CD8-positive, alpha-beta T cell (primary cell): ENCODE measurements at regions of chr19 and their contacts with region 1.

Region 1: DNA sequence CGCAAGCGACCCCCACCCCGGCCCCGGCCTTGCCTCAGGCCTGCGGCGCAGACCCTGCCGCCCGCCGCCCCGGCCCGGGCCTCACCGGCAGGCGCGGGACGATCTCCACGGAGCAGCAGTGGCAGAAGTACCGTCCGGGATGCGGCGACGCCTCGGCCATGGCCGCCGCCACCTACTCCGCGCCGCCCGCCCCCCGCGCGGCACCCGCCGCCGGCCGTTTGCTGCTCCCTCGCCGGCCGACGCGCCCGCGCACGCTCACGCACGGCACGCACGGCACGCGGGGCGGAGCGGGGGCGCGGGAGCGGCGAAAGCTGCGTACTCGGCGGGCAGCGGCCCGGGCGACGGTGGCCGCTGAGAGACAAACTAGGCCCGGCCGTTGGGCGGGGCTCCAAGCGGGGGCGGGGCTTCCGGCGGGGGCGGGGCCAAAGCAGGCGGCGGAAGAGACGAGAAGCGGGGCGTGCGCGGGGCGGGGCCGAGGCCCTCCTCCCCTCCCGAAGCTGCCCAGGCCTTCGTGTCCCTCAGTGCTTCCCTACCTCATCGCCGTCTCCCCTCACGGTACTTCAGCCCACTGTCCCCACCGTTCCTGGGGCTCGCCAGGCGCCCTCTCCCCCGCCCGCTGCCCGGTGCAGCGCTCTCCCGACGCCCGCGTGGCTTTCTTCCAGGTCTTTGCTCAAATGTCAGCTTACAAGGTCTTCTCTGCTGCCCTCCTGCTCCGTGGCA is at the start of gene RNF126:
- DNase-seq: peak; percentile 91 to 97 (median 94)
- ATAC-seq: peak; percentile 48
- H3K4me3 ChIP-seq: peak within 1 kb of the TSS; percentile 67 to 70
- H3K4me3 Mint-ChIP-seq: peak within 1 kb of the TSS; percentile 96
- H3K27ac ChIP-seq: peak within 1 kb of the TSS; percentile 81 to 94
- H3K27ac Mint-ChIP-seq: peak within 1 kb of the TSS; percentile 99
- H3K4me1 ChIP-seq: peaks cover 45% of the 10 kb centered on the region
- H3K4me1 Mint-ChIP-seq: peaks cover 38% of the 10 kb centered on the region
- H3K27me3 ChIP-seq: peaks cover 0 to 2% of the 10 kb centered on the region in 2 experiments
- H3K27me3 Mint-ChIP-seq: no peaks in the 10 kb centered on the region
- CTCF ChIP-seq: no peak
- total RNA-seq, gene RNF126: 99.7 to 107 TPM

Region 2: DNA sequence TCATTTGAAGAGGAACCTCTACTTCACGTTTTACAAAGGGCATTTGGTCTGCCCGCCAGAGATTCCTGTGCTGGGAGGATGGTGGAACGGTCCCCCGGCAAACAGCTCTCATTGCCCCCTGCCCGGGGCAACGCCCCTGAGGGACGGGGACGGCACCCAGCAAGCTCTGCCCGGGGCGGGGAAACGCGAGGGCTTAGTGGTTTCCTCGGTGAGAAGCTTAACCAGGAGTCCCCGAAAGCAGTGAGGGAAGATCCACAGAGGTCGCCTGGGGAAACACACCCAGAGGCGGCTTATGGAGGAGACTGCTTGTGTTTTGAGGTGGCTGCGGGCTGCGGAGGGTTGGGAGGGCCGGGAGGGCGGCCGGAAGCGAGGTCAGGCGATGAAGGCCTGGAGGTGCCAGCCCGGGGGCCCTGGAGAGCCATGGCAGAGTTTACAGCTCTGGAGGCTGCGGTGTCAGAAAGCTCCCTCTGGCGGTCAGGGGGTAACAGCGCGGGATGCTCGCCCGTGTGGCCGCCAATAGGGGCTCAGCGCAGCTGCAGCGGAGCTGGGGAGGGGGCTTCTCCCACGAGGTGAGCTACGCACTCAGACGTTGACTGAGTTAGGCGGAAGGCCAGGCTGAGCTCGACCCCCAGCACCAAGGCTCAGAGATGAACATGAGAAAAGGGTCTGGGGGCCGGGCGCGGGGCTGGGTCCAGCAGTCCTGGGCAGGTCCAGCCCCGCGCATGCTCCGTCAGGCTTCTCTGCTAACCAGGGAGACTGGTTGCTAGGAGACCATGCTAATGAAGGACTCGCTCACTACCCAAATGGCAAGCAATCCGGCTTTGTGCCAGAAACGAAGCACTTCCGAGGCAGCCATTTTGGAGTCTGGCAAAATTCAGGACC is 156.5 kb before region 1 on chr19:
- CTCF ChIA-PET with region 1: interaction called, 4 read pairs
- POLR2A ChIA-PET with region 1: interaction called, 5 read pairs
- intact Hi-C with region 1: loop called (anchors 1 to 10 kb)
- DNase-seq: peak; percentile 83 to 98 (median 94)
- ATAC-seq: peak; percentile 49
- H3K4me3 ChIP-seq: peak overlapping the region; percentile 69 to 80
- H3K4me3 Mint-ChIP-seq: peak overlapping the region; percentile 96
- H3K27ac ChIP-seq: peak overlapping the region; percentile 87 to 98
- H3K27ac Mint-ChIP-seq: peak overlapping the region; percentile 98
- H3K4me1 ChIP-seq: peaks cover 42% of the 10 kb centered on the region
- H3K4me1 Mint-ChIP-seq: peaks cover 41% of the 10 kb centered on the region
- H3K27me3 ChIP-seq: no peaks in the 10 kb centered on the region
- H3K27me3 Mint-ChIP-seq: no peaks in the 10 kb centered on the region
- CTCF ChIP-seq: peak; percentile 93

Region 3: GRCh38 chr19:588093-588740 is 74.9 kb before region 1 on chr19:
- CTCF ChIA-PET with region 1: interaction called, 4 read pairs
- POLR2A ChIA-PET with region 1: no interaction called
- intact Hi-C with region 1: loop called in 1 of 2 experiments (anchors 2 kb)
- DNase-seq: peak in 8 of 9 experiments; percentile 36 to 81 (median 68)
- ATAC-seq: peak; percentile 65
- H3K4me3 ChIP-seq: no peak overlapping the region
- H3K4me3 Mint-ChIP-seq: peak overlapping the region; percentile 37
- H3K27ac ChIP-seq: no peak overlapping the region
- H3K27ac Mint-ChIP-seq: no peak overlapping the region
- H3K4me1 ChIP-seq: peaks cover 26% of the 10 kb centered on the region
- H3K4me1 Mint-ChIP-seq: peaks cover 16% of the 10 kb centered on the region
- H3K27me3 ChIP-seq: peaks cover 11 to 38% of the 10 kb centered on the region in 2 experiments
- H3K27me3 Mint-ChIP-seq: peaks cover 15% of the 10 kb centered on the region
- CTCF ChIP-seq: peak; percentile 61

Region 4: GRCh38 chr19:680287-681028 is 17.3 kb after region 1 on chr19:
- CTCF ChIA-PET with region 1: interaction called, 7 read pairs
- POLR2A ChIA-PET with region 1: interaction called, 23 read pairs
- intact Hi-C with region 1: loop called (anchors 1 kb)
- DNase-seq: peak; percentile 99 to 100 (median 100)
- ATAC-seq: peak; percentile 79
- H3K4me3 ChIP-seq: peak overlapping the region; percentile 59 to 94
- H3K4me3 Mint-ChIP-seq: peak overlapping the region; percentile 91
- H3K27ac ChIP-seq: peak overlapping the region; percentile 73 to 88
- H3K27ac Mint-ChIP-seq: peak overlapping the region; percentile 97
- H3K4me1 ChIP-seq: peaks cover 20% of the 10 kb centered on the region
- H3K4me1 Mint-ChIP-seq: peaks cover 8% of the 10 kb centered on the region
- H3K27me3 ChIP-seq: peaks cover 0 to 16% of the 10 kb centered on the region in 2 experiments
- H3K27me3 Mint-ChIP-seq: peaks cover 4% of the 10 kb centered on the region
- CTCF ChIP-seq: peak; percentile 37

Region 5: DNA sequence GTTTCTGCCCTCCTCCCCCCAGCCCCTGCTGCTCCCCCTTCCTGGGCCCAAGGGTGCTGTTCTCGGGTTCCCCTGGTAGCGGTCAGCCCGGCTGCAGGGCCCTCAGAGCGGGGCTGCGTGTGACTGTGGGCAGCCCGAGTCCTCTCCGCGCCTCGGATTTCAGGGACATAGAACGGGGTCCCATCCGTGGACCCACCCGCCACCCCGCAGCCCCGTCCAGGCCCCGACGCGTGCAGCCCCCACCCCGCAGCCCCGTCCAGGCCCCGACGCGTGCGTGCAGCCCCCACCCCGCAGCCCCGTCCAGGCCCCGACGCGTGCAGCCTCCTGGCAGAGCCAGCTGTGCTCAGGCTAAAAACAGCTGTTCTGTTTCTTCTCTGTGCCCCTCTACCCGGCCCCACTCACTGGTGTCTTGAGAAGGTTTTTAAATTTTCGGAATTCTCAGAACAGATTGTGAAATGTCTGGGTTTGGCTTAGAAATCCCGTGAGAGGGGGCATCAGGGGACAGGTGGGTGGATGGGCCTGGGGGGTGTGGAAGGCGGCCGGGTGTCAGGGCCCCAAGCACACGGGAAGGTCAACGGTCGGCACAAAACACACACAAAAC is 172.2 kb after region 1 on chr19:
- CTCF ChIA-PET with region 1: no interaction called
- POLR2A ChIA-PET with region 1: no interaction called
- intact Hi-C with region 1: no loop called
- DNase-seq: no peak
- ATAC-seq: no peak
- H3K4me3 ChIP-seq: no peak overlapping the region
- H3K4me3 Mint-ChIP-seq: no peak overlapping the region
- H3K27ac ChIP-seq: no peak overlapping the region
- H3K27ac Mint-ChIP-seq: no peak overlapping the region
- H3K4me1 ChIP-seq: no peaks in the 10 kb centered on the region
- H3K4me1 Mint-ChIP-seq: no peaks in the 10 kb centered on the region
- H3K27me3 ChIP-seq: peaks cover 0 to 4% of the 10 kb centered on the region in 2 experiments
- H3K27me3 Mint-ChIP-seq: peaks cover 15% of the 10 kb centered on the region
- CTCF ChIP-seq: no peak

Region 6: GRCh38 chr19:907183-907853 is 244.2 kb after region 1 on chr19:
- CTCF ChIA-PET with region 1: no interaction called
- POLR2A ChIA-PET with region 1: no interaction called
- intact Hi-C with region 1: loop called in 1 of 2 experiments (anchors 5 kb)
- DNase-seq: peak in 5 of 9 experiments; percentile 45 to 65 (median 51)
- ATAC-seq: no peak
- H3K4me3 ChIP-seq: no peak overlapping the region
- H3K4me3 Mint-ChIP-seq: peak overlapping the region; percentile 61
- H3K27ac ChIP-seq: peak overlapping the region; percentile 47 to 56
- H3K27ac Mint-ChIP-seq: peak overlapping the region; percentile 100
- H3K4me1 ChIP-seq: peaks cover 64% of the 10 kb centered on the region
- H3K4me1 Mint-ChIP-seq: peaks cover 56% of the 10 kb centered on the region
- H3K27me3 ChIP-seq: no peaks in the 10 kb centered on the region
- H3K27me3 Mint-ChIP-seq: no peaks in the 10 kb centered on the region
- CTCF ChIP-seq: no peak

Region 7: DNA sequence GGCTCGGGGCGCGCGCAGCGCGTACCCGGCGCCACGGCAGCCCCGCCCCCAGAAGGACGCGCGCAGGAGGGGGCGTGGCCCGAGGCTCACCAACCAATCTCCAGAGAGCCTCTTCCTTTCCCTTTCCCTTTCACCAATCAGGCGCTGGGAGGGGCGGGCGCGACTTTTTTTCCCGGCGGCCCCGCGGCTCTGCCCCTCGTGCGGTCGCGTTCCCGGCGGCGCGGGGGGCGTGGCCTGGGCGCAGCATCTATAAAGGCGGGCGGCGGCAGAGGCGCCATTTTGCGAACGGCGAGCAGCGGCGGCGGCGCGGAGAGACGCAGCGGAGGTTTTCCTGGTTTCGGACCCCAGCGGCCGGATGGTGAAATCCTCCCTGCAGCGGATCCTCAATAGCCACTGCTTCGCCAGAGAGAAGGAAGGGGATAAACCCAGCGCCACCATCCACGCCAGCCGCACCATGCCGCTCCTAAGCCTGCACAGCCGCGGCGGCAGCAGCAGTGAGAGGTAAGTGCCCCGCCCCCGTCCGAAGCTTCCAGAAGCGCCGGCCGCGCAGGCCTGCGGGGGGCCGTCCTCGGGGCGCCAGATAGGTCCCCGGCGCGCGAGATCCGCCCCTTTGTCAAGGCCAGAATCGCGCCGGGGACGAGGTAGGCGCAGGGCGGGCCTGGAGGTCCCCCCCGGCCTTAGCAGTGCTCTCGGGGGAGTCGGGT is 1606.3 kb after region 1 on chr19:
- CTCF ChIA-PET with region 1: no interaction called
- POLR2A ChIA-PET with region 1: no interaction called
- intact Hi-C with region 1: loop called in 1 of 2 experiments (anchors 5 kb)
- DNase-seq: peak; percentile 98 to 100 (median 99)
- ATAC-seq: peak; percentile 80
- H3K4me3 ChIP-seq: peak overlapping the region; percentile 82 to 98
- H3K4me3 Mint-ChIP-seq: peak overlapping the region; percentile 91
- H3K27ac ChIP-seq: peak overlapping the region; percentile 80 to 86
- H3K27ac Mint-ChIP-seq: peak overlapping the region; percentile 92
- H3K4me1 ChIP-seq: peaks cover 45% of the 10 kb centered on the region
- H3K4me1 Mint-ChIP-seq: peaks cover 35% of the 10 kb centered on the region
- H3K27me3 ChIP-seq: no peaks in the 10 kb centered on the region
- H3K27me3 Mint-ChIP-seq: no peaks in the 10 kb centered on the region
- CTCF ChIP-seq: no peak